A673 (cell line): ENCODE measurements at regions of chrX and their contacts with region 1.

Region 1: GRCh38 chrX:115226929-115227328 is 7.0 kb downstream of the LRCH2 start:
- DNase-seq: peak; percentile 11
- H3K4me3 ChIP-seq: no peak overlapping the region
- H3K27ac ChIP-seq: no peak overlapping the region
- H3K4me1 ChIP-seq: no peaks in the 10 kb centered on the region
- H3K27me3 ChIP-seq: peaks cover 21% of the 10 kb centered on the region
- CTCF ChIP-seq: peak; percentile 50

Region 2: GRCh38 chrX:114675365-114675764 is 551.6 kb before region 1 on chrX:
- CTCF ChIA-PET with region 1: no interaction called
- POLR2A ChIA-PET with region 1: interaction called, 13 read pairs
- intact Hi-C with region 1: no loop called
- DNase-seq: no peak
- H3K4me3 ChIP-seq: no peak overlapping the region
- H3K27ac ChIP-seq: no peak overlapping the region
- H3K4me1 ChIP-seq: no peaks in the 10 kb centered on the region
- H3K27me3 ChIP-seq: peaks cover 21% of the 10 kb centered on the region
- CTCF ChIP-seq: no peak

Region 3: DNA sequence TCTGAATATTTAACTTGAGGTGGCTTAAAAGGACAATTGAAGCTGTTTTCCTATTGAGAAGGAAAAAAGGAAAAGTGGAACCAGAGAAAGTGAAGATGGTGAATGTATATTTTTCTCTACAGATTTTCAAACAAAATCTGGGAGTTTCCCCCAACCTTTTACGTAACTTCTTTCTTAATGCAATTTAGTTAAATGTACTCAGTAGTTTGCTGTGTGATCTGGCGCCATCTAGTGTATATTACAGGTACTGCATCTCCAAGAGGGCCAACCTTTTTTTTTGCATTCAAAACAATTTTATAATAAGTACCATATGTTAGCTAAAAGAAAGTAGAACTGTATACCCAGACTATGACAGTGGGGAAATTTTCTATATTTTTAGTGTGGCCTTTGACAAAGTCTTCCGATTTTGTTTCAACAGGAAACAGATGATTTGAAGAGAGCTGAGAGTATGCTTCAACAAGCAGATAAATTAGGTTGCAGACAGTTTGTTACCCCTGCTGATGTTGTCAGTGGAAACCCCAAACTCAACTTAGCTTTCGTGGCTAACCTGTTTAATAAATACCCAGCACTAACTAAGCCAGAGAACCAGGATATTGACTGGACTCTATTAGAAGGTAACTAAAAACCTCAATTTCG is 416.1 kb after region 1 on chrX:
- CTCF ChIA-PET with region 1: no interaction called
- POLR2A ChIA-PET with region 1: no interaction called
- intact Hi-C with region 1: loop called (anchors 10 kb)
- DNase-seq: peak; percentile 76
- H3K4me3 ChIP-seq: no peak overlapping the region
- H3K27ac ChIP-seq: no peak overlapping the region
- H3K4me1 ChIP-seq: peaks cover 5% of the 10 kb centered on the region
- H3K27me3 ChIP-seq: peaks cover 20% of the 10 kb centered on the region
- CTCF ChIP-seq: peak; percentile 97